ENCODE measurements at regions of chr1 and their contacts with region 1.

Region 1: DNA sequence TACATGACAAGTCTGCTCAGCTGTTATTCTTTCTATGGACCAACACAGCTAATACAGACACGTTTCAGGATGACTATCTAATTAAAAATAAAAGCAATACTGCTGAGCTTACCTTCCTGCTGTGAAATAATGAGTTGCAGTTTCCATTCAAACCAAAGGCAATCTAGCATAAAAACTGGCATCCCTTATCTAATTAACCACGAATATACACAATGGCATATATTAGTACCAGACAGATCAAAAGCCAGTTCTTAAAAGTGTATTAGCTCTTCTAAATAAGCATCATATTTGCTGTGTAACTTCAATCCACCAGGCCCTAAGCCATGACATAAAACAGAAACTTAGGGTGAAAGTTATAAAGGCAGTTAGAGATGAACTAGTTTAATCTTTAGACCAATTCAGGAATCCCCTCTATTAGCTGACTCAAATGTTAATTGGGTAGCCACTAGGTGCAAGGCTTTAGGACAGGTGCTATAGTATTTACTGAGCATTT is 20.6 kb downstream of the TESK2 start:
- DNase-seq: no peak
- ATAC-seq: no peak
- H3K4me3 ChIP-seq: no peak overlapping the region
- H3K27ac ChIP-seq: no peak overlapping the region
- H3K4me1 ChIP-seq: no peaks in the 10 kb centered on the region
- H3K27me3 ChIP-seq: no peaks in the 10 kb centered on the region

Region 2: GRCh38 chr1:44862829-44863401 is 607.4 kb before region 1 on chr1:
- intact Hi-C with region 1: no loop called
- DNase-seq: no peak
- ATAC-seq: peak; percentile 36 to 67
- H3K4me3 ChIP-seq: no peak overlapping the region
- H3K27ac ChIP-seq: no peak overlapping the region
- H3K4me1 ChIP-seq: no peaks in the 10 kb centered on the region
- H3K27me3 ChIP-seq: no peaks in the 10 kb centered on the region

Region 3: DNA sequence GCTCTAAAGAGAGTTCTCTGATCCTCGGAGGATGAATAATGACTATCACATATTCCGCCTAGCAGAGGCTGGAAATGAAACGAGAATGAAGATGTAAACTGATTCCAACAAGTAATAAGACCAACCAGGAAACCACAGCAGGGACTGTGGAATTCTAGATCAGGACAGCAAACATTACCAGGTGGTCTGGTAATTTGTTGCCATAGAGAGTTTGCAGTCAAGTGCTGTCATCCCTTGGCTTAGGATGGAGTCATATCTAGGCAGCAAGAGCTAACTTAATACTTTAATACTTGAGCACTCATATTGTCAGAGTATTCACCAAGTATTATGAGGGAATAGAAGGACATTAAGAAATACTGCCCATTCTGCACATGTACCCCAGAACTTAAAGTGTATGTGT is 85.0 kb before region 1 on chr1:
- intact Hi-C with region 1: loop called in 1 of 4 experiments (anchors 10 kb)
- DNase-seq: no peak
- ATAC-seq: no peak
- H3K4me3 ChIP-seq: no peak overlapping the region
- H3K27ac ChIP-seq: no peak overlapping the region
- H3K4me1 ChIP-seq: no peaks in the 10 kb centered on the region
- H3K27me3 ChIP-seq: no peaks in the 10 kb centered on the region